ENCODE measurements at regions of chr2 and their contacts with region 1.

Region 1: GRCh38 chr2:136327162-136327852 is 209.4 kb upstream of the CXCR4 start:
- DNase-seq: peak; percentile 71
- ATAC-seq: peak; percentile 89
- H3K4me3 ChIP-seq: peak overlapping the region; percentile 37; the same call in 1 of the 2 replicates
- H3K27ac ChIP-seq: no peak overlapping the region
- H3K4me1 ChIP-seq: peaks cover 26% of the 10 kb centered on the region
- H3K27me3 ChIP-seq: 0 out of 4 replicates have a peak, but pooled peaks cover 0 to 2% of the 10 kb centered on the region in 2 experiments
- CTCF ChIP-seq: no peak
- EP300 ChIP-seq: peak; percentile 95 to 96; a peak in 3 of 4 replicates
- POLR2A ChIP-seq: no peak
- RAD21 ChIP-seq: no peak

Region 2: DNA sequence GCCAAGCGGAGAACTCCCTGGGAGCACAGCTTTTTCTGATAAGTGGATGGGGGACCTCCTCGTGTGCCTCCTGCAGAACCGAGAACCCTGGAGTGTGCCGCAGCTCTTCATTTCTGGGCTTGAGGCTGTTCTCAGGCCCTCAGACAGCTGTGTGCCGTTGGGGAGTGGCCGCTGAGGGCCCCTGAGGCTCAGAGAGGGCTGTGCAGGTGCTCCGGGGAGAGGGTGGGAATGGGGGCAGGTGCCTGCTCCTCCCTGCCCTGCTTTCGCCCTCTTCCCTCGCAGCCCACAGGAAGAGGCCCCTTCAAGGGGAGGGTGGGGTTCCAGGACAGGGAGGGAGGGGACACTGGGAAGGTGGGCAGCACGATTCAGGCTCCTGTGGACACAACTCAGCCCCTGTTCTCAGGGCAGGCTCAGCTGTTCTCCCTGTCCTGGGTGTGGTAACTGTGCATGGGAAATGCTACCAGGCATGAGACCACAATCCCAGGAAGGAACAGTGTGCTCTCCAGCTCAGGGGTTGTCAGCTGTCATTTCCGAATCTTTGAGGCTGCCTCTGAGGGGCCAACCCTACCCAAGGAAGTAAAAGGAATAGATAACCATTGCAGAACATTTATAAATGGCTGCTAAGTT is 501.6 kb before region 1 on chr2:
- CTCF ChIA-PET with region 1: no interaction called
- POLR2A ChIA-PET with region 1: no interaction called
- RAD21 ChIA-PET with region 1: no interaction called
- SMC1A ChIA-PET with region 1: no interaction called
- in situ Hi-C with region 1: no loop called
- intact Hi-C with region 1: no loop called
- DNase-seq: no peak
- ATAC-seq: peak; percentile 56
- H3K4me3 ChIP-seq: no peak overlapping the region
- H3K27ac ChIP-seq: no peak overlapping the region
- H3K4me1 ChIP-seq: peaks cover 24% of the 10 kb centered on the region
- H3K27me3 ChIP-seq: no peaks in the 10 kb centered on the region
- CTCF ChIP-seq: no peak
- EP300 ChIP-seq: no peak
- POLR2A ChIP-seq: no peak
- RAD21 ChIP-seq: no peak

Region 3: DNA sequence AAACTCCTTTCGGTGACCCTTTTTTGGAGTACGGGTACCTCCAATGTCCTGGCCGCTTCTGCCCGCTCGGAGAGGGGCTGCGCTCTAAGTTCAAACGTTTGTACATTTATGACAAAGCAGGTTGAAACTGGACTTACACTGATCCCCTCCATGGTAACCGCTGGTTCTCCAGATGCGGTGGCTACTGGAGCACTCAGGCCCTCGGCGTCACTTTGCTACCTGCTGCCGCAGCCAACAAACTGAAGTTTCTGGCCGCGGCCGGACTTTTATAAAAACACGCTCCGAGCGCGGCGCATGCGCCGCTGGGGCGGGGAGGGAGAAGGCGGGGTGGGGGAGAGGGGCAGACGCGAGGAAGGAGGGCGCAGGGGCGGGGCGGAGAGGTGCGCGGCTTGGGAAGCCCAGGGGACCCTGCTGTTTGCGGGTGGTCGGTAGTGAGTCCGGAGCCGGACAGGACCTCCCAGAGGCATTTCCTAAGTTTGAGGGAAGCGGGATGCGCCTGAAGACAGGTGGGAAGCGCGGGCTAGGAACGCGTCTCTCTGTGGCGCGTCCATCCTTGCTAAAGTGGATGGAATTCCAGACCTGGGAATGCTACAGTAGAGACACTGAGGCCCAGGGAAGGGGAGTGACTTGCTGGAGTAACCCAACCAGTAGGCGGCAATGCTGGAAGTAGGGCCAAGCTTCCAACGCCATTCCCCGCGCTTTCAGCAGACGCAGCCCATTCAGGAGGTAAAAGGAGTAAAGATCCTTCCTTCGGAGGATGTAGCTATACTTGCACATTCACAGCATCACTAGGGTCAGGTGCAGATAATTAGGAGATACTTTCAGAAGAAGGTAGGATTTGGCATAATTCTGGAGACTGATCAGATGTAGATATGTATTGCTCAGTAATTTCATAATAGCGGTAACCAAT is 209.1 kb before region 1 on chr2 and contains the start of gene CXCR4:
- CTCF ChIA-PET with region 1: no interaction called
- POLR2A ChIA-PET with region 1: interaction called, 3 read pairs
- RAD21 ChIA-PET with region 1: no interaction called
- SMC1A ChIA-PET with region 1: interaction called, 3 read pairs
- in situ Hi-C with region 1: no loop called
- intact Hi-C with region 1: loop called (anchors 5 kb)
- DNase-seq: no peak
- ATAC-seq: peak; percentile 43
- H3K4me3 ChIP-seq: peak within 1 kb of the TSS; percentile 85
- H3K27ac ChIP-seq: peak within 1 kb of the TSS; percentile 40; the same call in 1 of the 2 replicates
- H3K4me1 ChIP-seq: peaks cover 2% of the 10 kb centered on the region; the same call in 1 of the 2 replicates
- H3K27me3 ChIP-seq: peaks cover 0 to 12% of the 10 kb centered on the region in 2 experiments
- CTCF ChIP-seq: peak in 1 of 3 experiments; percentile 19; a peak in 1 of 6 replicates
- EP300 ChIP-seq: no peak
- POLR2A ChIP-seq: peak; percentile 97
- RAD21 ChIP-seq: 0 out of 2 replicates have a peak, but pooled peaks have one; percentile 9
- polyA plus RNA-seq, gene CXCR4: 31.1 to 32.3 TPM

Region 4: GRCh38 chr2:136238286-136239078 is 88.8 kb before region 1 on chr2:
- CTCF ChIA-PET with region 1: interaction called, 4 read pairs
- POLR2A ChIA-PET with region 1: interaction called, 6 read pairs
- RAD21 ChIA-PET with region 1: interaction called, 20 read pairs
- SMC1A ChIA-PET with region 1: interaction called, 28 read pairs
- in situ Hi-C with region 1: no loop called
- intact Hi-C with region 1: loop called (anchors 5 kb)
- DNase-seq: peak; percentile 78
- ATAC-seq: peak; percentile 89
- H3K4me3 ChIP-seq: no peak overlapping the region
- H3K27ac ChIP-seq: no peak overlapping the region
- H3K4me1 ChIP-seq: peaks cover 18% of the 10 kb centered on the region
- H3K27me3 ChIP-seq: no peaks in the 10 kb centered on the region
- CTCF ChIP-seq: no peak
- EP300 ChIP-seq: peak; percentile 97 to 99
- POLR2A ChIP-seq: no peak
- RAD21 ChIP-seq: no peak

Region 5: GRCh38 chr2:136281281-136282114 is 45.8 kb before region 1 on chr2:
- CTCF ChIA-PET with region 1: interaction called, 3 read pairs
- POLR2A ChIA-PET with region 1: interaction called, 3 read pairs
- RAD21 ChIA-PET with region 1: interaction called, 14 read pairs
- SMC1A ChIA-PET with region 1: interaction called, 11 read pairs
- in situ Hi-C with region 1: no loop called
- intact Hi-C with region 1: no loop called
- DNase-seq: peak; percentile 25
- ATAC-seq: peak; percentile 85
- H3K4me3 ChIP-seq: no peak overlapping the region
- H3K27ac ChIP-seq: no peak overlapping the region
- H3K4me1 ChIP-seq: peaks cover 22% of the 10 kb centered on the region
- H3K27me3 ChIP-seq: no peaks in the 10 kb centered on the region; a peak in 1 of 4 replicates
- CTCF ChIP-seq: no peak
- EP300 ChIP-seq: no peak
- POLR2A ChIP-seq: no peak
- RAD21 ChIP-seq: no peak

Region 6: DNA sequence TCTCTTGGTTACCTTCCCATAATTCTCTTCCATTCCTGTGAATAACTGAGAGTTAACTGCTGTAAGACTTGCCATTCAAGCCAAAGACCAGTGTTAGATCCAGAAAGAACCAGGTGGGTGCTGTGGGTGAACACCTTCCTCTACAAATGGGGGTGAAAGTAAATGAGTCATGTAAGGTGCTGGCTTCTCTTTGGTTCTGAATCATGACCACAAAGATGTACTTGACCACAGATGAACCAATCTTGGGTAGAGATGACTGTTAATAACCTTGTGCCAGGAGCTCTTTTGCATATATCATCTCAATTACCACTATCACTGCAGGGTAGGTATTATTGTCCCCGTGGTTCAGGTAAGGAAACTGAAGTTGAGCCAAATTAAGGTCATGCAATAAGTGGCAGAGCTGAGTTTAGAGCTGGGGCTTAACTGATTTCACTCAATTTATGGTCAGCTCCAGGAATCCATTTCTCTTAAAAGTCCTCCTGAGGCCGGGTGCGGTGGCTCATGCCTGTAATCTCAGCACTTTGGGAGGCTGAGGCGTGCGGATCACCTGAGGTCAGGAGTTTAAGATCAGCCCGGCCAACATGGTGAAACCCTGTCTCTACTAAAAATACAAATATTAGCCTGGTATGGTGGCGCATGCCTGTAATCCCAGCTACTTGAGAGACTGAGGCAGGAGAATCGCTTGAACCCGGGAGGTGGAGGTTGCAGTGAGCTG is 35.5 kb after region 1 on chr2:
- CTCF ChIA-PET with region 1: interaction called, 5 read pairs
- POLR2A ChIA-PET with region 1: interaction called, 8 read pairs
- RAD21 ChIA-PET with region 1: no interaction called
- SMC1A ChIA-PET with region 1: interaction called, 8 read pairs
- in situ Hi-C with region 1: no loop called
- intact Hi-C with region 1: loop called (anchors 5 kb)
- DNase-seq: no peak
- ATAC-seq: peak; percentile 94
- H3K4me3 ChIP-seq: no peak overlapping the region
- H3K27ac ChIP-seq: no peak overlapping the region
- H3K4me1 ChIP-seq: peaks cover 6% of the 10 kb centered on the region
- H3K27me3 ChIP-seq: no peaks in the 10 kb centered on the region
- CTCF ChIP-seq: no peak
- EP300 ChIP-seq: peak; percentile 39 to 87; a peak in 2 of 4 replicates
- POLR2A ChIP-seq: no peak
- RAD21 ChIP-seq: no peak

Measured in GM12878 (cell line).